CD8-positive, alpha-beta T cell (primary cell): ENCODE measurements at regions of chr9 and their contacts with region 1.

Region 1: DNA sequence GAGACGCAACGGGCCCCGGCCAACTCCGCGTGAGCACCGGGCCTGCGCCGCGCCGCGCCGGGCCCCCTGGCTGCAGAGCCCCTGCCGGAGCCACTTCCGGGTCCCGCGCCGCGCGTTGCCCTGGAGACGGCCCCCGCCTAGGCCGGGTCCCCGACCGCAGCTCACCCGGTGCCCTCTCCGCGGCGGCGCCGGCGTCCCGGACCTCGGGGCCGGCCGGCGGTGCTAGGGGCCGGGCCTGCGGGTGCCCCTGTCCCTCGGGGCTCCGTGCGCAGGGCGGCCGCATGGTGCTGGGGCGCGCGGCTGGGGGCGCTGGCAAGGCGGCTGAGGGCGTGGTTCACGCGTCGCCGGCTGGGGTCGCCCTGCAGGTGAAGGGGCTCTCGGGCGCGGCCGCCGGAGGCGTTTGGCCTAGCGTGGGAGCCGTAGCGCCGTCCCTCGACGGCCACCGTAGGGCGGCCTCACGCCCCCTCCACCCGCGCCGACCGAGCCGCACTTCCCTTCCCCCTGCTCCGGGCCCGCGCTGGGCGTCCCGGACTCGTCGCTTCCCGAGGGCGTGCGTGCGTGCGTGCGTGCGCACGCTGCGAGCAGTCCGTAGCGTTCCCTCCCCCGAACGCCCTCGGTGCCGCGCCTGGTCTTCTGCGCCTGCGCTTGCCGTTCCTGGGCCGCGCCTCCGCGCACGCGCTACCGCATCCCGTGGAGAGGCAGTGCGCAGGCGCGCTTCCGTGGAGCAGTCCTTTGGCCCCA is at the start of gene TMEM250:
- DNase-seq: peak; percentile 90 to 98 (median 95)
- ATAC-seq: peak; percentile 92
- H3K4me3 ChIP-seq: peak within 1 kb of the TSS; percentile 50 to 90
- H3K4me3 Mint-ChIP-seq: peak within 1 kb of the TSS; percentile 82
- H3K27ac ChIP-seq: peak within 1 kb of the TSS; percentile 66 to 79
- H3K27ac Mint-ChIP-seq: peak within 1 kb of the TSS; percentile 80
- H3K4me1 ChIP-seq: peaks cover 38% of the 10 kb centered on the region
- H3K4me1 Mint-ChIP-seq: peaks cover 21% of the 10 kb centered on the region
- H3K27me3 ChIP-seq: no peaks in the 10 kb centered on the region
- H3K27me3 Mint-ChIP-seq: no peaks in the 10 kb centered on the region
- CTCF ChIP-seq: no peak
- total RNA-seq, gene TMEM250: 7.6 to 7.7 TPM

Region 2: DNA sequence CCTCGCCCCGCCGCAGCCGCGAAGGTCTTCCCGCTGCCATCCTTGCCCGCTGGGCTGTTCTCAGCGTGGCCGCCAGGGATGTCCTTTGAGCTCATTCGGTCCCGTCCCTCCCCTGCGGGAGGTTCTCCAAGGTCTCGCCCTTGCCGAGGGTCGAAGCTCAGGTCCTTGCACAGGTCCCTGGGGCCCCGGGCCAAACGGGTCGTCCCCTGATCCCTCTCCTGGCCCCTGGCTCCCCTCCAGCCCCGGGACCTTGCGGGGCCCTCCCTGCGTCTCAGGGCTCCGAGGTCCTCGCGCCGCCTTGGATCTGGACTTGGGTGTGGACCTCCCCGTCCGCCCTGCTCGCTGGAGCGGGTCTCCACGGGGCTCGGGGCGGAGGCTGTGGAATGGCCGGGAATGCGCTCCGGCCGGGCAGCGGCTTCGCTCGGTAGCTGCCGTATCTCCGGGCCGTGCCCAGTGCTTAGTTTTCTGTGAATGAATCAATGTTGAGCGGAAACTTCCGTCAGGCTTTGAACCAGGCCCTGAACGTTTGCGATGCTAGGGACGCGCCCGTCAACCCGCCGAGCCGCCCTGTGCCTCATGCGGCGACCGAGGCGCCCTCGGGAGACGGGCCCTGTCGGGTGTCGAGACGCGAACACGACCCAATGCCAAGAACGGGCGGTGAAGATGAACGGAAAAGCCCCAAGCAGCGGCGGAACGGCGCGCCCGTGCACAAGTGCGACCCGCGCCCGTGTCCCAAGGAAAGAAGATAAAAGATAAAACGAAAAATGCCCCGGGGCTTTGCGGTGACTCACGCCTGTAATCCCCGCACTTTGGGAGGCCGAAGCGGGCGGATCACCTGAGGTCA is 1954.9 kb before region 1 on chr9:
- CTCF ChIA-PET with region 1: no interaction called
- POLR2A ChIA-PET with region 1: no interaction called
- intact Hi-C with region 1: loop called in 1 of 2 experiments (anchors 10 kb)
- DNase-seq: peak; percentile 38 to 87 (median 68)
- ATAC-seq: peak; percentile 19
- H3K4me3 ChIP-seq: no peak overlapping the region
- H3K4me3 Mint-ChIP-seq: no peak overlapping the region
- H3K27ac ChIP-seq: no peak overlapping the region
- H3K27ac Mint-ChIP-seq: no peak overlapping the region
- H3K4me1 ChIP-seq: peaks cover 18% of the 10 kb centered on the region
- H3K4me1 Mint-ChIP-seq: peaks cover 17% of the 10 kb centered on the region
- H3K27me3 ChIP-seq: no peaks in the 10 kb centered on the region
- H3K27me3 Mint-ChIP-seq: no peaks in the 10 kb centered on the region
- CTCF ChIP-seq: peak; percentile 32

Region 3: GRCh38 chr9:135701959-135702721 is 416.4 kb before region 1 on chr9 and contains the start of gene KCNT1:
- CTCF ChIA-PET with region 1: no interaction called
- POLR2A ChIA-PET with region 1: no interaction called
- intact Hi-C with region 1: loop called in 1 of 2 experiments (anchors 2 kb)
- DNase-seq: peak in 8 of 9 experiments; percentile 14 to 72 (median 57)
- ATAC-seq: peak; percentile 70
- H3K4me3 ChIP-seq: peak within 1 kb of the TSS in 1 of 2 experiments; percentile 8
- H3K4me3 Mint-ChIP-seq: peak within 1 kb of the TSS; percentile 15
- H3K27ac ChIP-seq: no peak within 1 kb of the TSS
- H3K27ac Mint-ChIP-seq: no peak within 1 kb of the TSS
- H3K4me1 ChIP-seq: peaks cover 11% of the 10 kb centered on the region
- H3K4me1 Mint-ChIP-seq: no peaks in the 10 kb centered on the region
- H3K27me3 ChIP-seq: peaks cover 2% of the 10 kb centered on the region in 2 experiments
- H3K27me3 Mint-ChIP-seq: peaks cover 7% of the 10 kb centered on the region
- CTCF ChIP-seq: peak; percentile 84
- total RNA-seq, gene KCNT1: not detected

Region 4: DNA sequence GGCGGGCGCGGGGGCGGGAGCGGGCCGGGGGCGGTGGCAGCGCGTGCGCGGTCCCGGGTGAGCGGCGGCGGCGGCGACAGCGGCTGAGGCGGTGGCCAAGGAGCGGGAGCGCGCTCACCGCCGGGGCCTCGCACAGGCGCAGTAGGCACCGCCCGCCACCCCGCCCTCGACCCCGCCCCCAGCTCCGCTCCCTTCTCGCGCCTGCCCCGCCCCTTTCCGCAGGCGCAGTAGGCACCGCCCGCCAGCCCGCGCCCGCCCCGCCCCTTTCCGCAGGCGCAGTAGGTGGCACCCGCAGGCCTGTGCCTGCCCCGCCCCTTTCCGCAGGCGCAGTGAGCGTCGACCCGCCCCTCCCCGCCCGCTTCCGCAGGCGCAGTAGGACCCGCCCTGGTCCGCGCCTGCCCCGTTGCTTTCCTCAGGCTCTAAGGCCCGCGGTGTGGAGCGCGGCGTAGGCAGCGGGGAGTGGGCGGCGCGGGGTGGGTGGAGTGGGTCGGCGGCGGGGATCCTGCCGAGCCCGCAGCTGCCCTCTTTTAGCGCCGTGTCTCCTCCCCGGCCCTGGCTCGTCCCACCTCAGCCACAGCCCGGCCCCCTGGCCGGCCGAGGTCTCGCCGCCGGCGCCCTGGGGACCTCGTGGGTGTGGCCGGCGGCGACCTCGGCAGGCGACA is 210.9 kb before region 1 on chr9 and contains the start of gene CAMSAP1:
- CTCF ChIA-PET with region 1: interaction called, 3 read pairs
- POLR2A ChIA-PET with region 1: no interaction called
- intact Hi-C with region 1: loop called in 1 of 2 experiments (anchors 1 kb)
- DNase-seq: peak; percentile 90 to 98 (median 96)
- ATAC-seq: peak; percentile 87
- H3K4me3 ChIP-seq: peak within 1 kb of the TSS; percentile 67 to 78
- H3K4me3 Mint-ChIP-seq: peak within 1 kb of the TSS; percentile 88
- H3K27ac ChIP-seq: peak within 1 kb of the TSS; percentile 21 to 71
- H3K27ac Mint-ChIP-seq: peak within 1 kb of the TSS; percentile 86
- H3K4me1 ChIP-seq: peaks cover 27% of the 10 kb centered on the region
- H3K4me1 Mint-ChIP-seq: peaks cover 48% of the 10 kb centered on the region
- H3K27me3 ChIP-seq: no peaks in the 10 kb centered on the region
- H3K27me3 Mint-ChIP-seq: no peaks in the 10 kb centered on the region
- CTCF ChIP-seq: no peak
- total RNA-seq, gene CAMSAP1: 16.4 to 20.8 TPM

Region 5: DNA sequence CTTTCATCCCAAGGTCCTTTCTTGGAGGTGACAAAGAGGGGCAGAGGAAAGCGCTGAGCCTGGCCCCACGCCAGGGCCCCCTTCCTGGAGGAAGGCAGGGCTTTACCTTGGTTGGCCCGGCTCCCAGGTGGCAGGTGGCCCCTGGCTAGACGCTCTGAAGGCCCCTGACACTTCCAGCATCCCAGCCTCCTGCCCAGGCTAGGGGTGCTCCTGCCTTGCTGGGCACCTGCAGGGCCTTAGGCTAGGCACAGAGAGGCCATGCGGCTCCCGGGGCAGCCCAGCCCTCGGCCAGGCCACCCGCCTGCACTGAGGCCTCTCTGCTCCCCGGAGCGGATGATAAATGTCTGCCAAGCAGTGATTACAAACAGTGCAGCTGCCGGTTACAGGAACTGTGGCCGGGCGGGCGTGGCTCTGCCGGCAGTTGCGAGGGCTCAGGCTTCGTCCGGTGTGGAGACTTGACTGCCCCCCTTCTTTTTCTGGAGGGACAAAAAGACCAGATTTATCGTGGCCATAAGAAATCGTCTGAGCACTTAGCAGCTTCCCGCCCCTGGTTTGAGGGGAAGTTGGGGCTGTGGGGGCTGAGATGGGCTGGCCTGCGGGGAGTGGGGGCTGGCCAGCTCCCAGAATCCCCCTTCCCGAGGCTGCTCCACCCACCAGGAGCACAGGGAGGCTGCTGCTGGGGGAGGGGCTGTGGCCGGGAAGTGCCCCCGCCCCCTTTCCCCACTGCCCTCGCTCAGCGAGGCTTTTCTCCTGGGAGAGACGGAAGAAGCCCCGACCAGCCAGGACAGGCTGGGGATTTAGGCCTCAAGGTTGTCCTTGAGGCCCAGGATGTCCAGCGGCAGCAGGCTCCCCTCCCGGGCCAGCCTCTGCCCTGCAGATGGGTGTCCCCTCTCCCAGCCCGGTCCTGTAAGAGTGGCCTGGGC is 125.7 kb before region 1 on chr9:
- CTCF ChIA-PET with region 1: interaction called, 6 read pairs
- POLR2A ChIA-PET with region 1: no interaction called
- intact Hi-C with region 1: loop called in 1 of 2 experiments (anchors 1 kb)
- DNase-seq: peak in 7 of 9 experiments; percentile 28 to 75 (median 49)
- ATAC-seq: no peak
- H3K4me3 ChIP-seq: peak overlapping the region; percentile 33
- H3K4me3 Mint-ChIP-seq: peak overlapping the region; percentile 26
- H3K27ac ChIP-seq: peak overlapping the region in 1 of 2 experiments; percentile 54
- H3K27ac Mint-ChIP-seq: no peak overlapping the region
- H3K4me1 ChIP-seq: peaks cover 27% of the 10 kb centered on the region
- H3K4me1 Mint-ChIP-seq: peaks cover 11% of the 10 kb centered on the region
- H3K27me3 ChIP-seq: no peaks in the 10 kb centered on the region
- H3K27me3 Mint-ChIP-seq: no peaks in the 10 kb centered on the region
- CTCF ChIP-seq: no peak

Region 6: GRCh38 chr9:136039488-136039887 is 79.0 kb before region 1 on chr9:
- CTCF ChIA-PET with region 1: no interaction called
- POLR2A ChIA-PET with region 1: no interaction called
- intact Hi-C with region 1: no loop called
- DNase-seq: no peak
- ATAC-seq: no peak
- H3K4me3 ChIP-seq: no peak overlapping the region
- H3K4me3 Mint-ChIP-seq: no peak overlapping the region
- H3K27ac ChIP-seq: no peak overlapping the region
- H3K27ac Mint-ChIP-seq: no peak overlapping the region
- H3K4me1 ChIP-seq: no peaks in the 10 kb centered on the region
- H3K4me1 Mint-ChIP-seq: no peaks in the 10 kb centered on the region
- H3K27me3 ChIP-seq: no peaks in the 10 kb centered on the region
- H3K27me3 Mint-ChIP-seq: no peaks in the 10 kb centered on the region
- CTCF ChIP-seq: no peak

Region 7: DNA sequence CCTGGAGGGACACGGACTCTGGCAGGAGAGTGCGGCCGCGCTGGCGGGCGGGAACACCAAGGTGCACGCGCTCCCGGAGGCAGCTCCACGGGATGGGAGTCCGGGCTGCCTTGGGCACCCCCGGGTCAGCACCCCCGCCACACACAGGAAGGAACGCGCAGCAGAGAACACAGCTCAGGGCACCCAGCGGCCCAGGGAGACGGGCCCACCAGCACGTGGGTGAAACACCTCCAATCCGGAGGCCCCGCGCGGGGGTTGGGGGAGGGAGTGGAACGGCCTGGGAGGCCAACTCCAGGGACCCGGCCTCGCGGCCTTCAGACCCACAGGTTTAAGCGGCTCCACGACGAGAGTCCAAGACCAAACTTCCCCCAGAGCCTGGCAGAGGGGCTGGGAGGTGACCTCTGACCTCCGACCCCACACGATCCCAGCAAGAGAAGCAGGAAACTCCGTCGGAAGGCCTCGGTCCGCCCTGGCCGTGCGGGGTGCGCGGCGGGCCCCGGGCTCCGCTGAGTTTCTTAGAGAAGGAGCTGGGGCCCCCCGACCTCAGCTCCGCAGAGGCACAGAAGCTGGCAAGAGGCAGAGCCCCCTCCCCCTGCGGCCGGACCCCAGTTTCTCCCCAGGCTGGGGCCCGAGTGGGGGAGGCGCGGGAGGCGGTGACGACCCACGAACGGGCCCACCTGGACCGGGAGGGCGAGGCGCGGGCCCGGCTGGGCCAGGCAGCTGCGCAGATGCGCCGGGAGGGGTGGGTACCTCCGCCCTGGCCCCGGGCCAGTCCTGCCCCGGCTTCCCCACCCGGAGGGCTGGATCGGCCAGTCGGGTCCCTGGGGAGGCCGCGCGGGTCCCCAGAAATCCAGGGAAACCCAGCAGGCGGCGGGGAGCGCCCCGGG is 24.3 kb before region 1 on chr9:
- CTCF ChIA-PET with region 1: interaction called, 103 read pairs
- POLR2A ChIA-PET with region 1: interaction called, 6 read pairs
- intact Hi-C with region 1: loop called (anchors 1 kb)
- DNase-seq: peak in 8 of 9 experiments; percentile 43 to 74 (median 62)
- ATAC-seq: peak; percentile 77
- H3K4me3 ChIP-seq: peak overlapping the region; percentile 57 to 67
- H3K4me3 Mint-ChIP-seq: peak overlapping the region; percentile 74
- H3K27ac ChIP-seq: peak overlapping the region; percentile 33 to 68
- H3K27ac Mint-ChIP-seq: no peak overlapping the region
- H3K4me1 ChIP-seq: peaks cover 33% of the 10 kb centered on the region
- H3K4me1 Mint-ChIP-seq: peaks cover 35% of the 10 kb centered on the region
- H3K27me3 ChIP-seq: no peaks in the 10 kb centered on the region
- H3K27me3 Mint-ChIP-seq: no peaks in the 10 kb centered on the region
- CTCF ChIP-seq: no peak